Natural killer cell (primary cell): ENCODE measurements at regions of chr2 and their contacts with region 1.

Region 1: DNA sequence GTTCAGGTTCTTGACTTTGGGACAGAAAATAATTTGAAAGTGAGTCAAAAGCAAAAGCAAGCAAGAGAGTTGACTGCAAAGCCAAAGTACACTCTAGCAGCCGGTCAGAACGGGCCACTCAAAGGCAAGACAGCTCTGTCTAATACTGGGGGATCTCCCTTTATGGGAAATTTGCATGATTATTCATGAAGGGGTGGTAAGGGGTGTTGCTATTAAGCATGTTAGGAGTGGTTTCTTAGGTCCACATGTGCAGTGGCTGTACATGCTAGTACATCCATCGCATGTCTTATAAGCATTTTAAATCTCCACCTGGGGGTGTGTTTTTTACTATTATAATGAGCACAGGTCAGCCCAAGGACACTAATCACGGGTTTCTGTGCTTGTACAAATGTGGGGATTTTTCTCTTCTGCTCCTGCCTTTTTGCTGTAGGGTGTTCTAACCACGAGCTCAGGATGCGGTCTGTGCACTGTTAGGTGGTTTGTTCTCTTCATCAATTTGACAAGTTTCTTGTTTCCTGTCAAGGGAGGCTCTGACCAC is 60.2 kb upstream of the SPP2 start:
- DNase-seq: peak; percentile 65 to 90
- ATAC-seq: peak; percentile 85 to 92 (median 86)
- H3K4me3 ChIP-seq: no peak overlapping the region
- H3K4me3 Mint-ChIP-seq: peak overlapping the region; percentile 45
- H3K27ac ChIP-seq: peak overlapping the region; percentile 66
- H3K27ac Mint-ChIP-seq: peak overlapping the region; percentile 59 to 86
- H3K4me1 ChIP-seq: peaks cover 56% of the 10 kb centered on the region
- H3K4me1 Mint-ChIP-seq: peaks cover 48 to 50% of the 10 kb centered on the region in 2 donors
- H3K27me3 ChIP-seq: no peaks in the 10 kb centered on the region
- H3K27me3 Mint-ChIP-seq: peaks cover 0 to 5% of the 10 kb centered on the region in 2 donors
- CTCF ChIP-seq: no peak

Region 2: DNA sequence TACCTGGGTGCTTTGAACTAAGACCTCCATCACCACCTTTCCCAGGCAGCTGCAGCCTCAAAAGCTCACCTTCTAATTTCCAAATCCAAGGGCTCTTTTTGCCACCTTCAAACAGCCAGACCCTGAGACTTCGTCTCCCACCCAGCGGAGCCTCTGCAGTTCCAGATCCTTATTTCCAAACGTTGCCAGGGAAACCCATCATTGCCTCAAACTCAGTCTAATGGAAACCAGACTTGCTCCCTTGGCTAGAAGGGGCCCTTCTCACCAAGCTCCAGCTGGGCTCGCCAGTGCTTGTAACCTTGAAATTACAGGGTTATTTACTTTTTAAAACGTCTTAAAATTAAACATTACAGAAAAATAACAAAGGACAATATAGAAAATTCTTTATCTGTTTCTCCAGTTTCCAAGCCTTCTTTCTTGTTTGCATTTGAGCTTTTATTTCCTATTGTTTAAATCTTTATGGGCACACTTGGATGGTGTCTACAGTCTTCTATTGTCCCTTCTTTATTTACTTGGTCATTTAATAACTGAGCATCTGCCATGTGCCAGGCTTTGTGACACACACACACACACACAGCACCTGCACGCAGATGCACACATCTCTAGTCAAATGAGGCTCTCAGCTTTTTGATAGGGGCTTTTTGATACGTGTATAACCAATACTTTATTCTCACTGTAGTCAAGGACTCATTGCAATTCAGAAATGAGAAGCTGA is 37.1 kb before region 1 on chr2:
- intact Hi-C with region 1: no loop called
- DNase-seq: no peak
- ATAC-seq: no peak
- H3K4me3 ChIP-seq: no peak overlapping the region
- H3K4me3 Mint-ChIP-seq: no peak overlapping the region
- H3K27ac ChIP-seq: no peak overlapping the region
- H3K27ac Mint-ChIP-seq: no peak overlapping the region
- H3K4me1 ChIP-seq: no peaks in the 10 kb centered on the region
- H3K4me1 Mint-ChIP-seq: no peaks in the 10 kb centered on the region
- H3K27me3 ChIP-seq: peaks cover 4% of the 10 kb centered on the region
- H3K27me3 Mint-ChIP-seq: peaks cover 30 to 60% of the 10 kb centered on the region in 2 donors
- CTCF ChIP-seq: no peak

Region 3: GRCh38 chr2:234032279-234032856 is 42.0 kb after region 1 on chr2:
- intact Hi-C with region 1: loop called (anchors 1 kb)
- DNase-seq: peak in 1 of 2 donors; percentile 80
- ATAC-seq: peak; percentile 73 to 90 (median 83)
- H3K4me3 ChIP-seq: no peak overlapping the region
- H3K4me3 Mint-ChIP-seq: peak overlapping the region; percentile 71
- H3K27ac ChIP-seq: peak overlapping the region; percentile 58
- H3K27ac Mint-ChIP-seq: peak overlapping the region; percentile 83 to 85
- H3K4me1 ChIP-seq: peaks cover 37% of the 10 kb centered on the region
- H3K4me1 Mint-ChIP-seq: peaks cover 59 to 62% of the 10 kb centered on the region in 2 donors
- H3K27me3 ChIP-seq: no peaks in the 10 kb centered on the region
- H3K27me3 Mint-ChIP-seq: no peaks in the 10 kb centered on the region
- CTCF ChIP-seq: no peak

Region 4: DNA sequence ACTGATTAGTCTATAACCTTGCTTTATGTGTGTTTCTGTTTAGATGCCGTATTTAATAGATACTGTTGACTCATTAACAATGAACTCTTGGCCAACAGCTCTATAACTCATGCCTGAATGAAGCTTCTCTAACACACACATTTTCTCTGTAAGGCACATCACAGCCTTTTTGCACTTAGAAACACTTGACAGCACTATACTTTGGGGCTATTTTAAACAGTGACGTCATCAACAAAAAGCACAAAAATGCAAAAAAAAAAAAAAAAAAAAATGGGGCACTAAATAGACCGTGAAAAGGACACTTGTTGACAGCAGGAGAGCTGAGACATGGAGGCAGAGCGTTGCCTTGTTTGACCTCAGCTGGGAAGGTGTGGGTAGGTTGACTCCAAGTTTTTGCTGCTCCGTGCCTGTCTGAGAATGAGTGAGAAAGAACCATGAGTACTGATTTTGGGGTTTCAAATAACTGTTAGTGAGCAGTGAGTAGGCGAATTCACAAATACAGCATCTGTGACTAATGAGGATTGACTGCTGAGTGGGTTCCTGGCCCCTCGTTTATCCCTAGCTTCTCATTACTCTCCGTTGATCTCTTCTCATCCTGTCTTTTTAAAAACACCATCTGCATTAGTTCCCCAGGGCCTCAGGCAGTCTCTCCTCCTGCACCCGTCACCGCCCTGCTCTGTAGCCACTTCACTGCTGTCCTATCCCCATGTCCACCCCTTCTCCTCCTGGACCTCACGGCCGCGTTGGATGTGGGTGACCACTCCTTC is 84.6 kb after region 1 on chr2:
- intact Hi-C with region 1: loop called (anchors 5 kb)
- DNase-seq: no peak
- ATAC-seq: no peak
- H3K4me3 ChIP-seq: no peak overlapping the region
- H3K4me3 Mint-ChIP-seq: no peak overlapping the region
- H3K27ac ChIP-seq: no peak overlapping the region
- H3K27ac Mint-ChIP-seq: no peak overlapping the region
- H3K4me1 ChIP-seq: peaks cover 46% of the 10 kb centered on the region
- H3K4me1 Mint-ChIP-seq: peaks cover 56 to 65% of the 10 kb centered on the region in 2 donors
- H3K27me3 ChIP-seq: no peaks in the 10 kb centered on the region
- H3K27me3 Mint-ChIP-seq: peaks cover 0 to 4% of the 10 kb centered on the region in 2 donors
- CTCF ChIP-seq: no peak

Region 5: GRCh38 chr2:234100686-234101085 is 110.4 kb after region 1 on chr2:
- intact Hi-C with region 1: loop called (anchors 2 kb)
- DNase-seq: peak in 1 of 2 donors; percentile 63
- ATAC-seq: peak; percentile 55 to 86 (median 81)
- H3K4me3 ChIP-seq: no peak overlapping the region
- H3K4me3 Mint-ChIP-seq: peak overlapping the region; percentile 61
- H3K27ac ChIP-seq: peak overlapping the region; percentile 76
- H3K27ac Mint-ChIP-seq: peak overlapping the region; percentile 69 to 81
- H3K4me1 ChIP-seq: peaks cover 30% of the 10 kb centered on the region
- H3K4me1 Mint-ChIP-seq: peaks cover 53 to 57% of the 10 kb centered on the region in 2 donors
- H3K27me3 ChIP-seq: no peaks in the 10 kb centered on the region
- H3K27me3 Mint-ChIP-seq: no peaks in the 10 kb centered on the region
- CTCF ChIP-seq: no peak

Region 6: GRCh38 chr2:234488913-234489451 is 498.7 kb after region 1 on chr2:
- intact Hi-C with region 1: loop called (anchors 2 kb)
- DNase-seq: peak; percentile 51 to 93
- ATAC-seq: peak; percentile 55 to 62 (median 56)
- H3K4me3 ChIP-seq: no peak overlapping the region
- H3K4me3 Mint-ChIP-seq: peak overlapping the region; percentile 100
- H3K27ac ChIP-seq: peak overlapping the region; percentile 94
- H3K27ac Mint-ChIP-seq: peak overlapping the region; percentile 95 to 99
- H3K4me1 ChIP-seq: peaks cover 82% of the 10 kb centered on the region
- H3K4me1 Mint-ChIP-seq: peaks cover 89 to 92% of the 10 kb centered on the region in 2 donors
- H3K27me3 ChIP-seq: no peaks in the 10 kb centered on the region
- H3K27me3 Mint-ChIP-seq: no peaks in the 10 kb centered on the region
- CTCF ChIP-seq: no peak